Heart left ventricle (tissue), 16 donors: ENCODE measurements at regions of chr9 and their contacts with region 1.

Region 1: DNA sequence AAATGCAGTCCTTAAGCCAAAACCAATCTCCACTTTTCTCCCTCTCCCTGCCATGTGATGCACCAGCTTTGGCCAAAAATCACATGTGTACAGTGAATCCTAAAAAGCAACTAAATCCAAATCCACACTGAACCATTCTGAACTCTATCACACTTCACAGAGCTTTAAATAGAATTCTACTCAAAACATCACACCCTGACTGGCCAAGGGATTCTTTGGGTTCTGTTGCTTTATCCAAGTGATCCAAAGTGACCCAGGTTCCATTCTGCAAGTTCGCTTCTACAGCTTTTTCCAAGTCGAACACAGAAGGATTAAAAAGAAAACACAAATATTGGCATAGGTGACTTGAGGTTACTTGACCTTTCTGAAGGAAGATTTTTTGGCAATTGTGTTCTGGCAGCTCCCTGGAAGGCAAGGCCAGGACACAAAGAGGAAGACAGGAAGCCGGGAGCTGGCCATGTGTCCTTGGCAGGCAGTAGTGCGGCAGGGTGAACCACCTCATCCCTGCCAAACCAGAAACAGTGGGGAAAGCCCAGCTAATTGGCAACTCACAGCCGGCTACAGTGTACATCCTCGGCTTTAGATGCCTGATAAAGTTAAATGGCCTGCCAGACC is 115.0 kb downstream of the NFIB start:
- DNase-seq: peak; percentile 74 to 83 (median 78)
- ATAC-seq: peak; percentile 74 to 91 (median 86)
- H3K4me3 ChIP-seq: peak overlapping the region in 6 of 12 donors; percentile 1 to 32 (median 8)
- H3K27ac ChIP-seq: peak overlapping the region; percentile 21 to 83 (median 68)
- H3K4me1 ChIP-seq: peaks cover 16 to 98% (median 77%) of the 10 kb centered on the region in 12 donors
- H3K27me3 ChIP-seq: no peaks in the 10 kb centered on the region
- CTCF ChIP-seq: no peak
- POLR2A ChIP-seq: no peak

Region 2: GRCh38 chr9:14271093-14271673 is 72.2 kb after region 1 on chr9:
- intact Hi-C with region 1: loop called in 1 of 10 experiments (anchors 5 kb)
- DNase-seq: peak; percentile 72 to 79 (median 77)
- ATAC-seq: peak; percentile 44 to 74 (median 60)
- H3K4me3 ChIP-seq: no peak overlapping the region
- H3K27ac ChIP-seq: peak overlapping the region in 10 of 12 donors; percentile 8 to 68 (median 44)
- H3K4me1 ChIP-seq: peaks cover 14 to 79% (median 63%) of the 10 kb centered on the region in 12 donors
- H3K27me3 ChIP-seq: no peaks in the 10 kb centered on the region
- CTCF ChIP-seq: no peak
- POLR2A ChIP-seq: no peak

Region 3: GRCh38 chr9:14302405-14302804 is 103.5 kb after region 1 on chr9:
- intact Hi-C with region 1: loop called in 1 of 10 experiments (anchors 5 kb)
- DNase-seq: no peak
- ATAC-seq: peak in 1 of 4 donors; percentile 10
- H3K4me3 ChIP-seq: no peak overlapping the region
- H3K27ac ChIP-seq: peak overlapping the region in 8 of 12 donors; percentile 8 to 58 (median 46)
- H3K4me1 ChIP-seq: peaks cover 4 to 100% (median 82%) of the 10 kb centered on the region in 12 donors
- H3K27me3 ChIP-seq: no peaks in the 10 kb centered on the region
- CTCF ChIP-seq: no peak
- POLR2A ChIP-seq: no peak